A673 (cell line): ENCODE measurements at regions of chr1 and their contacts with region 1.

Region 1: GRCh38 chr1:3564921-3565827 is 46.1 kb downstream of the MEGF6 start:
- DNase-seq: peak; percentile 51
- H3K4me3 ChIP-seq: no peak overlapping the region
- H3K27ac ChIP-seq: no peak overlapping the region
- H3K4me1 ChIP-seq: no peaks in the 10 kb centered on the region
- H3K27me3 ChIP-seq: no peaks in the 10 kb centered on the region
- CTCF ChIP-seq: peak; percentile 95

Region 2: DNA sequence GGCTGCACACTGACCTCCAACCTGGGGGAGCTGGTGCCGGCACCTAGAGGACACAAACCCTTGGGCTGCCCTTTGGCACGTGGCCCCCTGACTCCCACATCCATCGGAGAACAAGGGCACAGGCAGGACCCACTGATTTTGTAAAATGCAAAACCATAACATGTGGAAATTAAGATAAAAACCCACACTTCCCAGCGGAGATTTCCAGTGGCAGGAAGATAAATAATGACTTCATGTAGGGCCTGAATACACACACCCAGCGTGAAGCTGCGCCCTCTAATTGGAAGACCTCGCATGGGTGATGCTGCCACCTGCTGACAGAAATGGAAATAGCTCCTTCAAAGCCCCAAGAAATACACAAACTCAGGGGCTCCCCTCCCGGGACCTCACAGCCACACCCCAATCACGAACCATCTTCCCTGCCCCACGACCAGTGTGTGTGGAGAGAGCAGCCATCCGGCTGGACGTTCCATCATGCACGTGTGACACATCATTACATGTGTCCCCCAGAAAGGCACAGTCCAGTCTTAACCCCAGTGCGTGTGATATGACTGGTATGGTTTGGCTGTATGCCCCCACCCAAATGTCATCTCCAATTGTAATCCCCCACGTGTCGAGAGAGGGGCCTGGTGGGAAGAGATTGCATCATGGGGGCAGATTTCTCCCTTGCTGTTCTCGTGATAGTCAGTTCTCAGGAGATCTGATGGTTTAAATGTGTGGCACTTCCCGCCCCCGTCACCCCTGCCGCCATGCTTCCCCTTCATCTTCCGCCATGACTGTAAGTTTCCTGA is 53.9 kb after region 1 on chr1:
- CTCF ChIA-PET with region 1: interaction called, 18 read pairs
- POLR2A ChIA-PET with region 1: no interaction called
- intact Hi-C with region 1: loop called (anchors 1 kb)
- DNase-seq: peak; percentile 87
- H3K4me3 ChIP-seq: no peak overlapping the region
- H3K27ac ChIP-seq: no peak overlapping the region
- H3K4me1 ChIP-seq: peaks cover 5% of the 10 kb centered on the region
- H3K27me3 ChIP-seq: no peaks in the 10 kb centered on the region
- CTCF ChIP-seq: peak; percentile 91

Region 3: GRCh38 chr1:3717715-3718601 is 152.8 kb after region 1 on chr1:
- CTCF ChIA-PET with region 1: no interaction called
- POLR2A ChIA-PET with region 1: no interaction called
- intact Hi-C with region 1: loop called (anchors 5 kb)
- DNase-seq: peak; percentile 54
- H3K4me3 ChIP-seq: no peak overlapping the region
- H3K27ac ChIP-seq: no peak overlapping the region
- H3K4me1 ChIP-seq: peaks cover 13% of the 10 kb centered on the region
- H3K27me3 ChIP-seq: no peaks in the 10 kb centered on the region
- CTCF ChIP-seq: no peak